Activated naive CD4-positive, alpha-beta T cell treated with anti-CD3 and anti-CD28 coated beads for 36 hours (primary cell): ENCODE measurements at regions of chr19 and their contacts with region 1.

Region 1: DNA sequence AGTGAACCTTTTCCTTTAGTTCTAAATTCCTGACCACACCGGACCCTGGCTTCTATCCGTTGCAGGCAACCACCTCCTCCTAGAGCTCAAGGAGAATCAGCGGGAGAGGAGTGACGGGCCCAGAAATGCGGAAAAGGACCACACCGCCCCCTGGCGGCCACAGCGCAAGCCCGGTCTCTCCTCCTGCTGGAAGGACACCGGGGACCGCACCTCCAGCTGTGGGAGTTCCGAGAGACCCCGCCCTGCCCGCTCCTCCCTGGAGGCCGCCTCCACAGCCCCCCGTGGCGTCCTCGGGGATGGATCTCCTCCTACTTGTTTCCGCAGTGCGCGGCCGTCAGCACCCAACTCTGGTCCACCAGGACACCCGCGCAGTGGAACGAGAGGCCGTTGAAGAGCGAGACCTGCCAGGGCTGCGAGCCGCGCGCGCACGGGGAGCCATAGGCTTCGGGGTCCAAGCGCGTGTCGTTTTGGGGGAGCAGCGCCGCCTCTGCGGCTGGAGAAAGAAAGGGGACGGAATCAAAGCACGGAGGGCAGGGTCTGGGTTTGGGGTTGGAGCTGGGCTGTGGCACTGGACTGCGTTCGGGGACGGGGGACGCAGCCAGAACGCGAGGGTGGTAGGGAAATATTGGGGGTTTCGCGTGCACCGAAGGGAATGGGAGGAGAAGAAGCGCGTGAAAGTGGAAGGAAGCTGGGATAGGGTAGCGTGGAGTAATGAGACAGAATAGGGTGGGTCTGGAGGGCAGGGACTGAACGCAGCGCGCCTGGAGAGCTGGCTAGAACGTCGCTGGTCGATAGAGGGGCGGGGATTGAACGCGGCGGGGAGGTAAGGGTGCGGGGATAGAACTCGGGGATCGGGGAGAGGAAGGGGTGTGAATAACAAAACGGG is 2.5 kb downstream of the KLK10 start:
- DNase-seq: peak; percentile 32
- H3K4me3 Mint-ChIP-seq: no peak overlapping the region
- H3K27ac Mint-ChIP-seq: no peak overlapping the region
- H3K4me1 Mint-ChIP-seq: peaks cover 13% of the 10 kb centered on the region
- H3K27me3 Mint-ChIP-seq: peaks cover 62% of the 10 kb centered on the region

Region 2: DNA sequence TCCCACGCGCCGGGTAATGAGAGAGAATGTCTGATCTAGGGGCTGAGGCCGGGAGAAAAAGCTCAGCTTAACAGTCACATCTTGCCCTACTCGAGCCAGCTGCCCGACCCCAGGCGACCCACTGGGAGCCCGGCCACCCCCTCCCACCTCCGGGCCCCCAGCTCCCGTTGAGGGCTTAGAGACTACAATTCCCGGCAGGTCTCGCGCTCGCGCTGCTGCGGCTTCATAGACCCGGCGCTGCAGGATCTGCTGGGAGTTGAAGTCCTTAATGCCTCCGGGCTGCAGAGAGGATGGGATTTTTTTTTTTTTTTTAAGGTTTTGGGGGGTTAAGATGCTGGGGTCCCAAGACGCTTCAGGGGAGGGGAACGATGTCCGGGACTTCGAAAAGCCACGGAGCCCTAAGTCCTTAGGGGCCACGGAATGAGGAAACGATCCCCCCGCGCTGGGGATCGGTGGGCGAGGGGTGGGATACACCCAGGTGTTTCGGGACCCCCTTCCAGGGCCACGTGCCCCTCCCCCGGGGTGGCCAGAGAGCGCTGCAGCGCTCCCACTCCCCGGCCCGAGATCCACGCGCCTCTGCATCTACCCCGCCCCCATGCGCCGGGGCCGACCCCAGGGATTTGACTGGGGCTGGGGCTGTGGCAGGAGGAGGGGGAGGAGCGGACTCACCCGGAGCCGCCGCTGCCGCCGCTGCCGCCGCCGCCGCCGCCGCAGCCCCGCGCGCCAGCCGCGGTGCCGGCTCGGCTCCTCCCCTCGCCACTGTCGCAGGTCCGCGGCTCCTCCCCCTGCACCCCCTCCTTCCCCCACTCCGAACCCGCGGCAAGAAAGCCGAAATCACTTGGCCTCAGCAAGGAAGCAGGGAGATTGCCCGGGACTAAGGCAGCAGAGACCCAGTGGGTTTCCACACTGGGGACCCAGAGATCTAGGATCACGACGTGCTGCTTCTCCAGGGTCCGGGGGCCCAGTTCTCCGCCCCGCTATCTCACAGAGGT is 377.6 kb before region 1 on chr19 and contains the start of gene SYT3:
- CTCF ChIA-PET with region 1: no interaction called
- intact Hi-C with region 1: no loop called
- DNase-seq: peak; percentile 48
- H3K4me3 Mint-ChIP-seq: peak within 1 kb of the TSS; percentile 56
- H3K27ac Mint-ChIP-seq: no peak within 1 kb of the TSS
- H3K4me1 Mint-ChIP-seq: peaks cover 7% of the 10 kb centered on the region
- H3K27me3 Mint-ChIP-seq: peaks cover 47% of the 10 kb centered on the region
- total RNA-seq, gene SYT3: not detected

Region 3: DNA sequence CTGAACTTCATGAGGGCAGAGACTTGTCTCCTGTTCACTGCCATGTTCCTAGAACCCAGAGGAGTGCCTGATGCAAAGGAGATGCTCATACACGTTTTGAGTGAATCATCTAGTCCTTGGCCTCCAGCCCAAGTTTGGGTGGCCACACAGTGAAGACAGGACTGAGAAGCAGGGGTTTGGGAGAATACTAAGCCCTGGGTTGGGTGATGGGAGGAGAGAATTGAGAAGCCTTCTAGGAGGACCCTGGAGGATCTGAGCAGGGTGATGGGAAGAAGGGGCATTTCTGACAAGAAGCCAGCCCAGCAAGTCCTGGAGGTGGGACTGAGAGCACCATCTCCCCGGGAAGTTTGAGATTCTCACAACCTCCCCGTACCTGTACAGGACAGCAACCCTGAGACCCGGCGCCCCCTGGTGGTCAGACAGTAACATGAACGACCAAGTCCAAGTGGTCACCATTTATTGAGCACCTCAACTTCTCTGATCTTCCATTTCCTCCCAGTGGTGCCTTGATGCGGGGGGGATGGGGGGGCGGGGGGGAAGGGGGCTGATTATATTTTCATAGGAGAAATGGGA is 80.2 kb after region 1 on chr19:
- CTCF ChIA-PET with region 1: interaction called, 22 read pairs
- intact Hi-C with region 1: loop called (anchors 1 kb)
- DNase-seq: peak; percentile 83
- H3K4me3 Mint-ChIP-seq: no peak overlapping the region
- H3K27ac Mint-ChIP-seq: no peak overlapping the region
- H3K4me1 Mint-ChIP-seq: peaks cover 32% of the 10 kb centered on the region
- H3K27me3 Mint-ChIP-seq: no peaks in the 10 kb centered on the region

Region 4: GRCh38 chr19:51168564-51169282 is 151.7 kb after region 1 on chr19:
- CTCF ChIA-PET with region 1: interaction called, 7 read pairs
- intact Hi-C with region 1: loop called (anchors 1 kb)
- DNase-seq: no peak
- H3K4me3 Mint-ChIP-seq: no peak overlapping the region
- H3K27ac Mint-ChIP-seq: no peak overlapping the region
- H3K4me1 Mint-ChIP-seq: peaks cover 18% of the 10 kb centered on the region
- H3K27me3 Mint-ChIP-seq: peaks cover 4% of the 10 kb centered on the region